WTC11 (cell line): ENCODE measurements at regions of chr17 and their contacts with region 1.

Region 1: GRCh38 chr17:42221937-42222745 is 27.8 kb upstream of the GHDC start:
- DNase-seq: peak; percentile 61
- ATAC-seq: peak; percentile 93
- H3K4me3 Mint-ChIP-seq: no peak overlapping the region
- H3K27ac Mint-ChIP-seq: no peak overlapping the region
- H3K4me1 Mint-ChIP-seq: no peaks in the 10 kb centered on the region
- H3K27me3 Mint-ChIP-seq: no peaks in the 10 kb centered on the region
- CTCF ChIP-seq: peak; percentile 59; the same call in 1 of the 2 replicates

Region 2: GRCh38 chr17:42183741-42184711 is 38.1 kb before region 1 on chr17:
- CTCF ChIA-PET with region 1: interaction called, 55 read pairs
- POLR2A ChIA-PET with region 1: no interaction called
- DNase-seq: peak; percentile 88
- ATAC-seq: peak; percentile 60
- H3K4me3 Mint-ChIP-seq: peak overlapping the region; percentile 80
- H3K27ac Mint-ChIP-seq: no peak overlapping the region
- H3K4me1 Mint-ChIP-seq: peaks cover 28% of the 10 kb centered on the region
- H3K27me3 Mint-ChIP-seq: peaks cover 70% of the 10 kb centered on the region
- CTCF ChIP-seq: peak; percentile 81

Region 3: GRCh38 chr17:42243493-42243996 is 21.4 kb after region 1 on chr17:
- CTCF ChIA-PET with region 1: interaction called, 25 read pairs
- POLR2A ChIA-PET with region 1: no interaction called
- DNase-seq: no peak
- ATAC-seq: no peak
- H3K4me3 Mint-ChIP-seq: no peak overlapping the region
- H3K27ac Mint-ChIP-seq: peak overlapping the region; percentile 63
- H3K4me1 Mint-ChIP-seq: peaks cover 9% of the 10 kb centered on the region
- H3K27me3 Mint-ChIP-seq: no peaks in the 10 kb centered on the region
- CTCF ChIP-seq: no peak

Region 4: GRCh38 chr17:42276359-42276608 is 54.1 kb after region 1 on chr17 and contains the start of gene STAT5B:
- CTCF ChIA-PET with region 1: interaction called, 23 read pairs
- POLR2A ChIA-PET with region 1: interaction called, 3 read pairs
- DNase-seq: peak; percentile 68
- ATAC-seq: peak; percentile 57; the same call in 1 of the 2 replicates
- H3K4me3 Mint-ChIP-seq: peak within 1 kb of the TSS; percentile 86
- H3K27ac Mint-ChIP-seq: peak within 1 kb of the TSS; percentile 72
- H3K4me1 Mint-ChIP-seq: peaks cover 50% of the 10 kb centered on the region
- H3K27me3 Mint-ChIP-seq: peaks cover 6% of the 10 kb centered on the region
- CTCF ChIP-seq: no peak
- total RNA-seq, gene STAT5B: 36.4 to 42.2 TPM (median 37.9 TPM) in 3 replicates

Region 5: GRCh38 chr17:42329025-42329976 is 107.2 kb after region 1 on chr17:
- CTCF ChIA-PET with region 1: interaction called, 15 read pairs
- POLR2A ChIA-PET with region 1: no interaction called
- DNase-seq: peak; percentile 76
- ATAC-seq: peak; percentile 99
- H3K4me3 Mint-ChIP-seq: peak overlapping the region; percentile 38
- H3K27ac Mint-ChIP-seq: peak overlapping the region; percentile 97
- H3K4me1 Mint-ChIP-seq: peaks cover 30% of the 10 kb centered on the region
- H3K27me3 Mint-ChIP-seq: no peaks in the 10 kb centered on the region; the same call in 1 of the 2 replicates
- CTCF ChIP-seq: no peak

Region 6: GRCh38 chr17:42527273-42527703 is 305.1 kb after region 1 on chr17:
- CTCF ChIA-PET with region 1: interaction called, 25 read pairs
- POLR2A ChIA-PET with region 1: no interaction called
- DNase-seq: peak; percentile 86
- ATAC-seq: peak; percentile 95
- H3K4me3 Mint-ChIP-seq: no peak overlapping the region
- H3K27ac Mint-ChIP-seq: no peak overlapping the region
- H3K4me1 Mint-ChIP-seq: peaks cover 4% of the 10 kb centered on the region
- H3K27me3 Mint-ChIP-seq: peaks cover 21% of the 10 kb centered on the region
- CTCF ChIP-seq: peak; percentile 79